ENCODE measurements at regions of chr1 and their contacts with region 1.

Region 1: GRCh38 chr1:25616095-25616986 is at the start of gene MAN1C1:
- DNase-seq: peak; percentile 79
- H3K4me3 ChIP-seq: peak within 1 kb of the TSS; percentile 57
- H3K27ac ChIP-seq: no peak within 1 kb of the TSS
- H3K4me1 ChIP-seq: peaks cover 12% of the 10 kb centered on the region
- H3K27me3 ChIP-seq: peaks cover 58% of the 10 kb centered on the region
- CTCF ChIP-seq: no peak
- total RNA-seq, gene MAN1C1: 0.21 and 0.22 TPM in 2 replicates

Region 2: DNA sequence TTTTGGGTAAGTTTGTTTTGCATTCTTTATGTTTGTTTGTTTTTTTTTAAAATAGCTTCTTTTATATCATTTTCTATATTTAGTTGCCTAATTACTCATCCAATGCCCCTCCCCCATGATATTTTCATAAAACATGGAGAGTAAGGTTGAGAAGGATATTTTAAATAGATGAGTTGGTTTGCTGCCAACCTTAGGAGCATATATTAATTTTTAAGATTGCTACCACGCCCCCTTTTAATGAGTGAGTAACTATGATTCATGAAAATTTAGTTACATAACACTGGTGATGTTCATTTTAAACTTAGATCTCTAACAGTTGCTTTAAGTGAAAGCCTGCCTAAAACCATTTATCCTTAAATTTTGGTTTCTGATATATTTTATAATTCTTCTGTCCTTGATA is 259.5 kb before region 1 on chr1:
- CTCF ChIA-PET with region 1: no interaction called
- POLR2A ChIA-PET with region 1: no interaction called
- intact Hi-C with region 1: no loop called
- DNase-seq: no peak
- H3K4me3 ChIP-seq: no peak overlapping the region
- H3K27ac ChIP-seq: no peak overlapping the region
- H3K4me1 ChIP-seq: no peaks in the 10 kb centered on the region
- H3K27me3 ChIP-seq: no peaks in the 10 kb centered on the region
- CTCF ChIP-seq: no peak

Region 3: DNA sequence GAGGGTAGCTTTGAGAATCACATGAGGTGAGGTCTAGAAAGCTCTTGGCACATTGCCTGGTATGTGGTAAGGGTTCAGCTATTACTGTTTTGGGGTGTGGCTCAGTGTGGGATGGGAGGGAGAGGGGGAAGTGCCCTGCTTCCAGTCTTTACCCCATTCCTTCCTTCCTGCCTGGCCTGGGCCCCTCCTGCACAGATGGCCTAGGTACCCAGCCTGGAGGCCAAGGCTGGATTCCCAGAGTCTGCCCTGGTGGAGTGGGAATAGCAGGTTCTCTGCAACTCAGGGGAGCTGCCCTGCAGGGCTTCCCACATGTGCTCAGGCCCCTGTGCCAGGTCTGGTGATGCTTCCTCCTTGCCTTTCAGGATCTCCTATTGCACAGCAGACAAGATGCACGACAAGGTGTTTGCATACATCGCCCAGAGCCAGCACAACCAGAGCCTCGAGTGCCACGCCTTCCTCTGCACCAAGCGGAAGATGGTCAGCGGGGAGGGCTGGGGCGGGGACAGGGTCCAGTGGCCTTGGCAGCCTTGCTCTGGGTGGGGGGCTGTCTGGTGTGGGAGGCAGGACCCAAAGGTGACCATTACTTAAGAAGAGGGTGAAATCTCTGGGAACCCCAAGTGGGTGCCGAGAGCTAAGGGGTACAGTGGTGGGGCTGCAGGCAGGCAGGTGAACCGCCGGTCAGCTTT is 59.4 kb before region 1 on chr1:
- CTCF ChIA-PET with region 1: no interaction called
- POLR2A ChIA-PET with region 1: no interaction called
- intact Hi-C with region 1: no loop called
- DNase-seq: no peak
- H3K4me3 ChIP-seq: no peak overlapping the region
- H3K27ac ChIP-seq: no peak overlapping the region
- H3K4me1 ChIP-seq: no peaks in the 10 kb centered on the region
- H3K27me3 ChIP-seq: no peaks in the 10 kb centered on the region
- CTCF ChIP-seq: no peak

Region 4: GRCh38 chr1:25810341-25811299 is 194.3 kb after region 1 on chr1:
- CTCF ChIA-PET with region 1: no interaction called
- POLR2A ChIA-PET with region 1: no interaction called
- intact Hi-C with region 1: loop called (anchors 5 kb)
- DNase-seq: peak; percentile 60
- H3K4me3 ChIP-seq: no peak overlapping the region
- H3K27ac ChIP-seq: no peak overlapping the region
- H3K4me1 ChIP-seq: no peaks in the 10 kb centered on the region
- H3K27me3 ChIP-seq: no peaks in the 10 kb centered on the region
- CTCF ChIP-seq: peak; percentile 97

Measured in A673 (cell line).